ENCODE measurements at regions of chr11 and their contacts with region 1.

Region 1: GRCh38 chr11:69704508-69705253 is 859 bp upstream of the FGF19 start:
- DNase-seq: no peak
- ATAC-seq: peak; percentile 81
- H3K4me3 ChIP-seq: peak overlapping the region; percentile 35 to 55
- H3K27ac ChIP-seq: no peak overlapping the region
- H3K4me1 ChIP-seq: peaks cover 7% of the 10 kb centered on the region
- H3K27me3 ChIP-seq: peaks cover 3% of the 10 kb centered on the region; the same call in 1 of the 2 replicates
- CTCF ChIP-seq: peak; percentile 97

Region 2: DNA sequence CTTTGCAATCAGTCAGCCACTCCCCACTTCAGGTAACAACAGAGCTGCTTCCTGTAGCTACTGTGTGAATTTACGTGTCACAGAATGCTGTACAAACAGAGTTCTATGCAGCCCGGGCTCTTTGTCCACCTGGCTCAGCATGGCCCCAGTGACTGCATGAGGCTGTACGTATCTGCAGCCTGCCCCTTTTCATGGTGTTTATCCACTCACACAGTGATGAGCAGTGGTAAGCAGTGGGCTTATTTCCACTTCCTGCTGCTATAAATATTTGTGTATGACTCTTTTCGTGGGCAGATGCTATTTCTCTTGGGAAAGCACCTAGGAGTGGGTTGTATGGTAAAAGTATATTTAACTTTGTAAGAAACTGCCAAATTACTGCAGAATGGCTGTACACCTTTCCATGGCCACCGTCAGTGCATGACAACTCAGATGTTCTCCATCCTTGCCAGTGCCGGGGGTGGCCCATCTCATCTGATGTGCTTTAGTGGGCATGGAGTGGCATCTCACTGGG is 367.4 kb before region 1 on chr11:
- CTCF ChIA-PET with region 1: no interaction called
- POLR2A ChIA-PET with region 1: no interaction called
- in situ Hi-C with region 1: no loop called
- intact Hi-C with region 1: no loop called
- DNase-seq: no peak
- ATAC-seq: peak; percentile 55
- H3K4me3 ChIP-seq: no peak overlapping the region
- H3K27ac ChIP-seq: peak overlapping the region; percentile 51
- H3K4me1 ChIP-seq: peaks cover 45% of the 10 kb centered on the region
- H3K27me3 ChIP-seq: no peaks in the 10 kb centered on the region
- CTCF ChIP-seq: no peak

Region 3: GRCh38 chr11:69675811-69676371 is 28.8 kb before region 1 on chr11:
- CTCF ChIA-PET with region 1: no interaction called
- POLR2A ChIA-PET with region 1: interaction called, 11 read pairs
- in situ Hi-C with region 1: no loop called
- intact Hi-C with region 1: no loop called
- DNase-seq: no peak
- ATAC-seq: peak; percentile 22
- H3K4me3 ChIP-seq: peak overlapping the region; percentile 82 to 99
- H3K27ac ChIP-seq: peak overlapping the region; percentile 75
- H3K4me1 ChIP-seq: peaks cover 4% of the 10 kb centered on the region; the same call in 1 of the 2 replicates
- H3K27me3 ChIP-seq: no peaks in the 10 kb centered on the region
- CTCF ChIP-seq: no peak

Region 4: GRCh38 chr11:69686452-69686851 is 18.2 kb before region 1 on chr11:
- CTCF ChIA-PET with region 1: no interaction called
- POLR2A ChIA-PET with region 1: no interaction called
- in situ Hi-C with region 1: no loop called
- intact Hi-C with region 1: no loop called
- DNase-seq: no peak
- ATAC-seq: no peak
- H3K4me3 ChIP-seq: no peak overlapping the region
- H3K27ac ChIP-seq: no peak overlapping the region
- H3K4me1 ChIP-seq: no peaks in the 10 kb centered on the region
- H3K27me3 ChIP-seq: no peaks in the 10 kb centered on the region
- CTCF ChIP-seq: no peak

Region 5: DNA sequence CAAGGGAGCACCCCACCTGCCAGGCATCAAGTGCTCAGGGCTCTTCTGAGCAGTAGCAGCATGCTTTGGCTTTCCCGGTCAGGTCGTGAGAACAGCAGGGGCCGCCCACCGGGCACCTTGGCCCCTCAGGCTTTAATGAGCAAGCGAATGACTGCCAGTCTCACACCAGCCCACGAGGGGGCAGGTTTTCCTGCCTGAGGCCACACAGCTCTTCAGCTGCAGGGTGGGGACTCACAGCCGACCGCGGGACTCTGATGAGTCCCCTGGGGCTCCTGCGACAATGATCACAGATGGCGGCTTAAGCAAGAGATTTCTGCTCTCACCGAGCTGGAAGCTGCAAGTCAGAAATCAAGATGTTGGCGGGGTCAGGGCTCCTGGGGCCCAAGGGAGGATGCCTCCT is 13.5 kb after region 1 on chr11:
- CTCF ChIA-PET with region 1: interaction called, 11 read pairs
- POLR2A ChIA-PET with region 1: no interaction called
- in situ Hi-C with region 1: no loop called
- intact Hi-C with region 1: no loop called
- DNase-seq: no peak
- ATAC-seq: peak; percentile 70
- H3K4me3 ChIP-seq: no peak overlapping the region
- H3K27ac ChIP-seq: no peak overlapping the region
- H3K4me1 ChIP-seq: no peaks in the 10 kb centered on the region
- H3K27me3 ChIP-seq: peaks cover 16% of the 10 kb centered on the region; the same call in 1 of the 2 replicates
- CTCF ChIP-seq: peak; percentile 79

Region 6: DNA sequence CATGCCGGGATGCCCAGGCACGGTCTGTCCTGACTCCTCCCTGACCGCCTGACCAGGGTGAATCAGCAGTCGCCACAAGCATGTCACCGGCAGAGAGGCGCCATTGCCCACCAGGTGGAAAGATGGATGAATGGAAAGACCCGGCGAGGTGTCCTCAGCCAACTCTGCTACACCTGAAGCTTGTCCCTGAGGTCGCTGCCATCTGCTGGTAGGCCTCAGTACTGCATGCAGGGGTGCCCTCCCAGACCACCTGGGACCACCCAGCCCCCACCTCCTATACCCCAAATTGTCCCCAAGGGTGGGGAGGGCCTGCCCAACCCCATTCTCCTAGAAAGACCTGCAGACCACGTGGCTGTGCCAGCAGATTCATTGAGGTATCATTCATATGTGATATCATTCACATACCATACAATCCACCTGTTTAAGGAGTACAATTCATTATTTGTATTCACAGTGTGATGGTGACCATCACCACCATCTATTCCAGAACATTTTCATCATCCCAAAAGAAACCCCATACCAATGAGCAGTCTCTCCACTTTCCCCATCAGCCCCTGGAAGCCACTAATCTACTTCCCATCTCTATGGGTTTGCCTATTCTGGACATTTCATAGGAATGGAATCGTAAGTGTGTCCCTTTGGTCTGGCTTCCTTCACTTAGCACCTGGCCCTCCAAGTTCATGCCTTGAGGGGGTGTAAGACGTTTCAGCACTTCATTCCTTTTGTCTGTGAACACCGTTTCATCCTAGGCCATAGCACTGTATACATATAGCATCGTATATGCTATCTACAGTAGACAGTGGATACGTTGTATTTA is 97.0 kb after region 1 on chr11:
- CTCF ChIA-PET with region 1: no interaction called
- POLR2A ChIA-PET with region 1: no interaction called
- in situ Hi-C with region 1: no loop called
- intact Hi-C with region 1: loop called (anchors 5 kb)
- DNase-seq: peak; percentile 12
- ATAC-seq: no peak; the same call in 1 of the 2 replicates
- H3K4me3 ChIP-seq: no peak overlapping the region
- H3K27ac ChIP-seq: no peak overlapping the region
- H3K4me1 ChIP-seq: no peaks in the 10 kb centered on the region
- H3K27me3 ChIP-seq: no peaks in the 10 kb centered on the region
- CTCF ChIP-seq: peak; percentile 92

Region 7: DNA sequence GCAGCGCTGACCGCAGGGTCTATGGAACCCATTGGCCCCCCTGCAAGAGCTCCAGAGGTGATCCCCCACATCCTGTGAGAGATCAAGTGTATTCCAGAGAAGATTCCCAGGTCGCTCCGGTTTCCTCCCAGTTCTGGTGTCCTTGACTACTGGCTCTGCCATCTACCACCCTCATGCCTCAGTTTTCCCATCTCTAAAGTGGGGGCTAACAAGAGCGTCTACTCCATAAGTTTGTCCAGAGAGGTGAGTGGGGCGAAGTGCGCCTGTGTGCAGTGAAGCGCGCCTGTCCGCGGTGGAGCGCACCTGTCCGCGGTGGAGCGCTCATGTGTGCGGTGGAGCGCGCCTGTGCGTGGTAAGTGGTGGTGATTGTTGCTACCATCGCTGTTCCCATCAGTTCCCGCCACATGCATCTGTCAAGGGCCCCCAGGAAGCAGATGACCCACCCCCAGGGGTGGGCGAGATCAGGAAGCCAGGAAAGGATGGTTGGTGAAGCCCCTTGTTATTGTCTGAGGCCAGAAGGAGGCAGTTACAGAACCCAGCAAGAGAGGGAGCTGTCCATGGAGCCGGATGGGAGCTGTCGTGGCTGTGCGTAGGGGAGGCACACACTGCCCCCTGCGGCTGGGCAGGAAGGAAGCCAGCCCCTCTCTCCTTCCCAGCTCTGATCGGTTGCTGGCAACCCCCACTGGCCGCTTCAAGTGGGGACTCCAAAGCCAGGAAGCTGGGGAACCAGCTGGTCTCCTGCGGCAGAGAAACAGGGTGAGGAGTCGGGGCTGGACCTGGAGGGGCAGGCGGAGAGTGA is 187.8 kb after region 1 on chr11:
- CTCF ChIA-PET with region 1: interaction called, 11 read pairs
- POLR2A ChIA-PET with region 1: no interaction called
- in situ Hi-C with region 1: no loop called
- intact Hi-C with region 1: no loop called
- DNase-seq: no peak
- ATAC-seq: 0 out of 2 replicates have a peak, but pooled peaks have one; percentile 20
- H3K4me3 ChIP-seq: no peak overlapping the region
- H3K27ac ChIP-seq: no peak overlapping the region
- H3K4me1 ChIP-seq: 0 out of 2 replicates have a peak, but pooled peaks cover 8% of the 10 kb centered on the region
- H3K27me3 ChIP-seq: peaks cover 12% of the 10 kb centered on the region
- CTCF ChIP-seq: no peak

Measured in Panc1 (cell line).